Activated naive CD4-positive, alpha-beta T cell treated with anti-CD3 and anti-CD28 coated beads for 36 hours (primary cell): ENCODE measurements at regions of chr1 and their contacts with region 1.

Region 1: GRCh38 chr1:145918144-145918992 is at the start of gene PEX11B:
- DNase-seq: peak; percentile 94
- H3K4me3 Mint-ChIP-seq: peak within 1 kb of the TSS; percentile 89
- H3K27ac Mint-ChIP-seq: peak within 1 kb of the TSS; percentile 93
- H3K4me1 Mint-ChIP-seq: peaks cover 39% of the 10 kb centered on the region
- H3K27me3 Mint-ChIP-seq: no peaks in the 10 kb centered on the region
- total RNA-seq, gene PEX11B: 18.0 to 19.0 TPM

Region 2: DNA sequence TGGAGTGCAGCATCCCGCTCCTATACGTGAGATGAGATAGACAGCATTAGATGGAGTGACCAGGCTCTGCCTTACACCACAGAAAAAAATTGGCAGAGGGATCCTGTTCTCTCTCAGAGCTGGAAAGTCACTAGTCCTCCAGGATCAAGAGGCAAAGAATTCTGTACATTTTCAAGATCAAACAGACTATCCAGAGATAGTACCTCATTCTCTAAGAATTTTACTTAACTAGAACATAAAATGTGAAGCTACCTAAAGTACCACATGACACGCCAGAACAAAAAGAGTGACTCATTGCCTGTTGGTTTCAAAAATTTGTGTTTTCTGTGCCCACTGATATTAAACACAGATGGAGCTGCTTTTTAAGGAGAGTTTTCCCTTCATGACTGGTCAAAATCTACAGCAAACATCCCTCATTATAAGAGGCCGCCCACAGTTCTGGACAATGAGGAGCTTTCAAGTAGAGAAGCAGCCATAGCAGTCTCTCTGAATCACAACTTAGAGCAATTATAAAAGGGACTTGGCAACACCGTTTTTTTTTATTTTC is 166.8 kb before region 1 on chr1:
- CTCF ChIA-PET with region 1: no interaction called
- intact Hi-C with region 1: loop called (anchors 10 kb)
- DNase-seq: no peak
- H3K4me3 Mint-ChIP-seq: no peak overlapping the region
- H3K27ac Mint-ChIP-seq: no peak overlapping the region
- H3K4me1 Mint-ChIP-seq: peaks cover 7% of the 10 kb centered on the region
- H3K27me3 Mint-ChIP-seq: no peaks in the 10 kb centered on the region

Region 3: DNA sequence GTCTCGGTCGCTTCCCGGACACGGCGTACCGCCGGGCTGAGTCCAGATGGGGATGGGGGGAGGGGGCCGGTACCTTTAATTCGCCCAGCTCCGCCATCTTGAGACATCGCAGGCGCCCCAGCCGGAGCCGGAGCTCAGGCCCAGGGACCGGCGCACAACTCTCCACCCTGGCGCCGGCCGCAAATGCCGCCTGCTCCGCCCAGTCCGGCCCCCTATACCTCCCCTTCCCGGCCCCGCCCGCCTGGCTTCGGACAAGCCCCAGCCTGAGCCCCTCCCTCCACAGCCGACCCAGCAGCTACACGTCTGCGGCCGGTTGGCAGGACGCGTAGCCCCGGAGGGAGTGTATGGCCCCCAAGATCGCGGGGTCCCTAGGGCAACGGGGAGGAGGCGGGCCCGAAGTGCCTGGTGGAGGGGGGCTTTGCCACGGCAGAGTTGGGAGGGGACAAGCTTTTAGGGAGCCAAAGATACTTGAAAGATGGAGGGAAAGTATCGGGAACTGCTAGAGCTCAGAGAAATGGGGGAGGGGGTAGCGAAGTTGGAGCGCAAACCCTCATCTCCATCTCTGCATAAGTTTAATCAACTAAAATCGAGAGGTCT is 59.4 kb before region 1 on chr1 and contains the start of gene PIAS3:
- CTCF ChIA-PET with region 1: interaction called, 7 read pairs
- intact Hi-C with region 1: loop called (anchors 1 kb)
- DNase-seq: peak; percentile 84
- H3K4me3 Mint-ChIP-seq: peak within 1 kb of the TSS; percentile 87
- H3K27ac Mint-ChIP-seq: peak within 1 kb of the TSS; percentile 83
- H3K4me1 Mint-ChIP-seq: peaks cover 9% of the 10 kb centered on the region
- H3K27me3 Mint-ChIP-seq: no peaks in the 10 kb centered on the region
- total RNA-seq, gene PIAS3: 19.1 to 19.6 TPM

Region 4: DNA sequence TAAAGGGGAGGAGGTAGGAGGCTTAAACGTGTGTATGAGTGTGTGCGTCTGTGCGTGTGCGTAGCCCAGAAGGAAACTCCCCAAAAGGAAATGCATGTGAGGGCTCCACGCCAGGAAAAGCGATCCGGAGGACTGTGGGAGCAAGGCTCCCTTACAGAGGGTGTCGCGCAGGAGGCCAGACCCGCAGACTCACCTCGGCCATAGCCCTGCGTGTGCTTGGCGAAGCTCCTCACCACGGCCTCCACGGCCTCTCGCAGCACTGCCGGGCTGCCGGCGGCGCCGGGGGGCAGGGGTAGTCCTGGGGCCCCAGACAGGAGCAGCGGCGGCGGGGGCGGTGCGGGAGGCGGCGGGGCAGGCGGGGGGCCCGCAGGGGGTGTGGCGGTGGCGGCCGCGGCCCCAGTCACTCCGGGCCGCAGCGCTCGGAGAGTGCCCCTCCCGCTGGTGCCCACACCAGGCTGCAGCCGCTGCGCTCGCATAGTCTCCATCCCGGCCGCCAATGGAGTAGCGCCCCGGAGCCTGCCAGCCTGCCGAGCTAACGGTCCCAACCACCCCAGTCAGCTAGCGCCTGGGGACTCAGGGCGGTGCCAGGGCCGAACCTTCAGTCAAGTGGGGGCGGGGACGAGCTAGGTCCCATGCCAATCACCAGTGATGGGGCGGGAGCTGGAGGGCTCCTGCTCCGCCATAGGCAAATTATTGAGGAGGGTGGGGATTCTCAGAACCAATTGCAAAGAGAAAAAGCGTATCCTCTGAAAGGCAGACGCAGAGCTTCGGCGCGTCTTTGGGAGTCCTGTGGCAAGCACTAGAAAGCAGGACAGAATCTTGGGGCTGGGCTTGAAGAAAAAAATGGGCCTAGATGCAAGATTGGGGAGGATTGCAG is 39.3 kb after region 1 on chr1 and contains the start of gene LIX1L:
- CTCF ChIA-PET with region 1: interaction called, 4 read pairs
- intact Hi-C with region 1: loop called (anchors 1 kb)
- DNase-seq: peak; percentile 98
- H3K4me3 Mint-ChIP-seq: peak within 1 kb of the TSS; percentile 83
- H3K27ac Mint-ChIP-seq: peak within 1 kb of the TSS; percentile 83
- H3K4me1 Mint-ChIP-seq: peaks cover 56% of the 10 kb centered on the region
- H3K27me3 Mint-ChIP-seq: no peaks in the 10 kb centered on the region
- total RNA-seq, gene LIX1L: 43.6 to 44.3 TPM

Region 5: GRCh38 chr1:145963995-145964901 is 45.9 kb after region 1 on chr1 and contains the starts of genes ANKRD34A and POLR3GL:
- CTCF ChIA-PET with region 1: interaction called, 6 read pairs
- intact Hi-C with region 1: loop called (anchors 1 kb)
- DNase-seq: peak; percentile 98
- H3K4me3 Mint-ChIP-seq: peak within 1 kb of the TSS; percentile 97
- H3K27ac Mint-ChIP-seq: peak within 1 kb of the TSS; percentile 84
- H3K4me1 Mint-ChIP-seq: peaks cover 35% of the 10 kb centered on the region
- H3K27me3 Mint-ChIP-seq: no peaks in the 10 kb centered on the region
- total RNA-seq, gene ANKRD34A: 3.7 to 4.3 TPM
- total RNA-seq, gene POLR3GL: 32.0 to 34.0 TPM

Region 6: DNA sequence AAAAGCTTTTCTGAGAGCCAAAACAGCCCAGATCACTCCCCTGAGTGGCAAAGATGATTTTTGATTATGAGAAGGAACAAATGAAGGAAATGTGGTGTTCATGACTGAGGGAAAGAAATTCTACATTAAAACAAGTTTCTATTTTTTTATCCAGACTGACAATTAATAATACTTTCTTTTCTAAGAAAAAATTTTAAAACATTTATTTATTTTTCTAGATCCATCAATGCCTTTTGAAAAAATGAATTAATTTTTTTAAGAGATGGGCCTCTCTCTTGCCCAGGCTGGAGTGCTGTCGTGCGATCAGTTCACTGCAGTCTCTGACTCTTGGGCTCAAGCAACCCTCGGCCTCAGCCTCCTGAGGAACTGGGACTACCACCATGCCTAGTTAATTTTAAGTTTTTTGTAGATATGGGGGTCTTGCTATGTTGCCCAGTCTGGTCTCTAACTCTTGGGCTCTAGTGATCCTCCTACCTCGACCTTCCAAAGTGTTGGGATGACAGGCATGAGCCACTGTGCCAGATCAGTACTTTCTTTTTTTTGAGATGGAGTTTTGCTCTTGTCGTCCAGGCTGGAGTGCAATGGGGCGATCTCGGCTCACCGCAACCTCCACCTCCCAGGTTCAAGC is 89.3 kb after region 1 on chr1:
- CTCF ChIA-PET with region 1: no interaction called
- intact Hi-C with region 1: loop called (anchors 2 kb)
- DNase-seq: no peak
- H3K4me3 Mint-ChIP-seq: no peak overlapping the region
- H3K27ac Mint-ChIP-seq: peak overlapping the region; percentile 93
- H3K4me1 Mint-ChIP-seq: peaks cover 38% of the 10 kb centered on the region
- H3K27me3 Mint-ChIP-seq: no peaks in the 10 kb centered on the region